Breast epithelium (tissue), 4 donors: ENCODE measurements at regions of chr3 and their contacts with region 1.

Region 1: GRCh38 chr3:38479431-38480092 is 16.6 kb upstream of the EXOG start:
- DNase-seq: peak in 1 of 2 donors; percentile 37
- H3K4me3 ChIP-seq: no peak overlapping the region
- H3K27ac ChIP-seq: no peak overlapping the region
- H3K4me1 ChIP-seq: no peaks in the 10 kb centered on the region
- H3K27me3 ChIP-seq: no peaks in the 10 kb centered on the region
- CTCF ChIP-seq: peak; percentile 26 to 74 (median 65)
- POLR2A ChIP-seq: no peak

Region 2: GRCh38 chr3:37375184-37376127 is 1104.1 kb before region 1 on chr3:
- intact Hi-C with region 1: no loop called
- DNase-seq: no peak
- H3K4me3 ChIP-seq: no peak overlapping the region
- H3K27ac ChIP-seq: no peak overlapping the region
- H3K4me1 ChIP-seq: no peaks in the 10 kb centered on the region
- H3K27me3 ChIP-seq: no peaks in the 10 kb centered on the region
- CTCF ChIP-seq: no peak
- POLR2A ChIP-seq: no peak

Region 3: GRCh38 chr3:38229036-38229435 is 250.5 kb before region 1 on chr3:
- intact Hi-C with region 1: no loop called
- DNase-seq: no peak
- H3K4me3 ChIP-seq: no peak overlapping the region
- H3K27ac ChIP-seq: no peak overlapping the region
- H3K4me1 ChIP-seq: no peaks in the 10 kb centered on the region
- H3K27me3 ChIP-seq: no peaks in the 10 kb centered on the region
- CTCF ChIP-seq: no peak
- POLR2A ChIP-seq: no peak

Region 4: GRCh38 chr3:38346587-38347410 is 132.8 kb before region 1 on chr3 and contains the start of gene XYLB:
- intact Hi-C with region 1: loop called (anchors 10 kb)
- DNase-seq: peak; percentile 63 to 81
- H3K4me3 ChIP-seq: peak within 1 kb of the TSS; percentile 66 to 98 (median 83)
- H3K27ac ChIP-seq: peak within 1 kb of the TSS; percentile 55 to 82
- H3K4me1 ChIP-seq: peaks cover 3 to 6% of the 10 kb centered on the region in 2 donors
- H3K27me3 ChIP-seq: no peaks in the 10 kb centered on the region
- CTCF ChIP-seq: peak; percentile 52 to 81 (median 77)
- POLR2A ChIP-seq: no peak
- total RNA-seq, gene XYLB: 5.2 to 7.9 (median 6.7) TPM

Region 5: GRCh38 chr3:38738630-38739395 is 259.3 kb after region 1 on chr3:
- intact Hi-C with region 1: no loop called
- DNase-seq: no peak
- H3K4me3 ChIP-seq: no peak overlapping the region
- H3K27ac ChIP-seq: no peak overlapping the region
- H3K4me1 ChIP-seq: no peaks in the 10 kb centered on the region
- H3K27me3 ChIP-seq: peaks cover 0 to 4% of the 10 kb centered on the region in 2 donors
- CTCF ChIP-seq: no peak
- POLR2A ChIP-seq: no peak